ENCODE measurements at regions of chr6 and their contacts with region 1.

Region 1: GRCh38 chr6:3742426-3743344 is 8.8 kb downstream of the PXDC1 start:
- DNase-seq: peak; percentile 88
- H3K4me3 ChIP-seq: peak overlapping the region in 1 of 3 experiments; percentile 25
- H3K27ac ChIP-seq: peak overlapping the region; percentile 74
- H3K4me1 ChIP-seq: peaks cover 77% of the 10 kb centered on the region
- H3K27me3 ChIP-seq: no peaks in the 10 kb centered on the region
- CTCF ChIP-seq: peak; percentile 88 to 93
- POLR2A ChIP-seq: no peak

Region 2: DNA sequence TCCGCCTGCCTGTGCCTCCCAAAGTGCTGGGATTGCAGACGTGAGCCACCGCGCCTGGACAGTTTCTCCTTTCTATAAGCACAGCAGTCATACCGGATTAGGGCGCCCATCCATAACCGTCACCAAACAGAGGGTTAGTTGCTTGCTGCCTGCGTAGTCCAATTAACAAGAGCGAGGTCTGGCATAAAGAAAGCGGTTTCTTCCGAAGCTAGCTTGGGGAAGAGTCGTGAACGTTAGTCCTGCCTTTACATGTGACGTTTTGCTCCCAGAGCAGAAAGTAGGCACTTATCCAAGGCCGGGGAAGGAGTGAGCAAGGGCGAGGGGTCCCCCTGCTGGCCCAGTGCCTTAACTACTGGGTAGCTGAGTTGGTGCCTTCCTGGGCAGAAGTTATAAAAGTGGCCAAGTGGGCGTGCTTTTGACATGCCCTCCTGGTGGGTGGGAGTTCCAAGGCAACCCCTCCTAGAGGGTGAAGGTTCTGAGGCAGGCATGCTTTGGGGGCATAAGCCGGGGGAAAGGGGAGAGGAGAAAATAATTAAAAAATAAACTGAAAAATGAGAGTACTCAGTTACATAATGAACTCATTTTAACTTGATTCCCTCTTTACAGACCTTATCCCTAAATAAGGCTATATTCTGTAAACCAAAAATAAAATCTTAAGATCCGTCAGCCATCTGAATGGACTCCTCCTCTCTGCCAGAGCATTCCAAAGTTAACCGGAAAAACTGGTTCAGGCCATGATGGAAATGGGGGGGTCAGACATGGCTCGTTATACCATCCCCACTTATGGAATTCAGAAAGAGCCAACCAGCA is 248.2 kb after region 1 on chr6:
- CTCF ChIA-PET with region 1: interaction called, 42 read pairs
- POLR2A ChIA-PET with region 1: interaction called, 3 read pairs
- dilution Hi-C with region 1: no loop called
- intact Hi-C with region 1: loop called (anchors 1 kb)
- DNase-seq: peak; percentile 91
- H3K4me3 ChIP-seq: no peak overlapping the region
- H3K27ac ChIP-seq: no peak overlapping the region
- H3K4me1 ChIP-seq: peaks cover 17% of the 10 kb centered on the region
- H3K27me3 ChIP-seq: no peaks in the 10 kb centered on the region
- CTCF ChIP-seq: peak; percentile 92 to 94
- POLR2A ChIP-seq: no peak